B cell (primary cell): ENCODE measurements at regions of chr16 and their contacts with region 1.

Region 1: GRCh38 chr16:17467923-17468540 is 2.7 kb downstream of the XYLT1 start:
- DNase-seq: peak; percentile 58
- ATAC-seq: peak; percentile 28
- H3K4me3 ChIP-seq: peak overlapping the region in 1 of 5 experiments; percentile 17
- H3K4me3 Mint-ChIP-seq: peak overlapping the region; percentile 93
- H3K27ac ChIP-seq: no peak overlapping the region
- H3K27ac Mint-ChIP-seq: no peak overlapping the region
- H3K4me1 ChIP-seq: peaks cover 42 to 46% of the 10 kb centered on the region in 2 donors
- H3K4me1 Mint-ChIP-seq: peaks cover 56% of the 10 kb centered on the region
- H3K27me3 ChIP-seq: no peaks in the 10 kb centered on the region
- H3K27me3 Mint-ChIP-seq: no peaks in the 10 kb centered on the region
- CTCF ChIP-seq: peak; percentile 12

Region 2: GRCh38 chr16:16861546-16861945 is 606.5 kb before region 1 on chr16:
- CTCF ChIA-PET with region 1: no interaction called
- POLR2A ChIA-PET with region 1: no interaction called
- intact Hi-C with region 1: loop called (anchors 5 kb)
- DNase-seq: peak; percentile 67
- ATAC-seq: no peak
- H3K4me3 ChIP-seq: no peak overlapping the region
- H3K4me3 Mint-ChIP-seq: no peak overlapping the region
- H3K27ac ChIP-seq: no peak overlapping the region
- H3K27ac Mint-ChIP-seq: no peak overlapping the region
- H3K4me1 ChIP-seq: no peaks in the 10 kb centered on the region
- H3K4me1 Mint-ChIP-seq: no peaks in the 10 kb centered on the region
- H3K27me3 ChIP-seq: no peaks in the 10 kb centered on the region
- H3K27me3 Mint-ChIP-seq: peaks cover 6% of the 10 kb centered on the region
- CTCF ChIP-seq: peak; percentile 81

Region 3: DNA sequence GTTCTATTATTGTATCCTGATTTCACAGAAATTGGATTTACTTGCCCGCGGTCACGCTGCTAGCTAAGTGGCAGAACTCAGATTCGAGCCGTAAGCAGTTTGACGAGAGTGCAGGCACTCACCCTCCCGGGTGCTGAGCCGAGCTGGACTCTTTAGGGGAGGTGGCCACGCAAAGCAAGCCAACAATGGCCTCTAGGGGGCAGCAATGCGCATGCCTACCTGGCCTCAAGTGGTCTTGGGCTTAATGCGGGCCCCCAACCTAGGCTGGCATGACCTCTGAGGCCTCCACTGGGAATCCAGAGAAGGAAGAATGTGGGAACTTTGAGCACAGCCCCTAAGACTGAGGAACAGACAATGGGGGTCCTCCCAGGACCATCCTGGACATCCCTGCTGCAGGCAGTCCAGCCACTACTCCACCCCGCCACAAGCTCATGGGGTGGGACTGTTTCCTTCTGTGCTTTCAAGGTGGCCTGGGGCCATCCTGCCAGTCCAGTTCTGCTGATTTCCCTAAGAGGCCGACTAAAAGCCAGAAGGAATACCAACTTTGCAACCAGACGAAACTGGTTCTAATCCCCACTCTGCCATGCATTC is 273.7 kb before region 1 on chr16:
- CTCF ChIA-PET with region 1: interaction called, 19 read pairs
- POLR2A ChIA-PET with region 1: no interaction called
- intact Hi-C with region 1: no loop called
- DNase-seq: peak; percentile 67
- ATAC-seq: peak; percentile 51
- H3K4me3 ChIP-seq: no peak overlapping the region
- H3K4me3 Mint-ChIP-seq: no peak overlapping the region
- H3K27ac ChIP-seq: no peak overlapping the region
- H3K27ac Mint-ChIP-seq: peak overlapping the region; percentile 15
- H3K4me1 ChIP-seq: peaks cover 0 to 3% of the 10 kb centered on the region in 2 donors
- H3K4me1 Mint-ChIP-seq: no peaks in the 10 kb centered on the region
- H3K27me3 ChIP-seq: no peaks in the 10 kb centered on the region
- H3K27me3 Mint-ChIP-seq: no peaks in the 10 kb centered on the region
- CTCF ChIP-seq: peak; percentile 76

Region 4: DNA sequence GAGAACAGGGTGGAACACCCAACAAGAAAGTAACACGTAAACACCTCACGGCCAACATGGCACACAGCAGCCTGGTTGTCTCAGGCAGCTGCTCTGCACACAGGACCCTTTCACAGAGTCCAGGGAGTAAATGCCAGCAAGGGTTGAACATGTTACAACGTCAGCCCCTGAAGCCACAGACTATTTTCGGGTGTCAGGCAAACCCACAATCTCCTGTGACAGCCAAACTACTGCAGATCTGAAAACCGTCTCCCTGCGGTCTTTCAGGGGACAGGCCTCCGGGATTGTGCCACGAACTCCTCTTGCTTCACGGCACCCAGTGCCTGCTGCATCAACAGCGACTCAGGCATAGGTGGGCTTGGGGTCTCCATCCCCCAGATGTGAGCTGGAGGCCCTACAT is 125.0 kb before region 1 on chr16:
- CTCF ChIA-PET with region 1: interaction called, 11 read pairs
- POLR2A ChIA-PET with region 1: no interaction called
- intact Hi-C with region 1: no loop called
- DNase-seq: peak; percentile 69
- ATAC-seq: peak; percentile 63
- H3K4me3 ChIP-seq: peak overlapping the region in 2 of 5 experiments; percentile 14 to 17
- H3K4me3 Mint-ChIP-seq: peak overlapping the region; percentile 66
- H3K27ac ChIP-seq: peak overlapping the region; percentile 62 to 72
- H3K27ac Mint-ChIP-seq: peak overlapping the region; percentile 87
- H3K4me1 ChIP-seq: peaks cover 73 to 80% of the 10 kb centered on the region in 2 donors
- H3K4me1 Mint-ChIP-seq: peaks cover 68% of the 10 kb centered on the region
- H3K27me3 ChIP-seq: no peaks in the 10 kb centered on the region
- H3K27me3 Mint-ChIP-seq: no peaks in the 10 kb centered on the region
- CTCF ChIP-seq: no peak

Region 5: DNA sequence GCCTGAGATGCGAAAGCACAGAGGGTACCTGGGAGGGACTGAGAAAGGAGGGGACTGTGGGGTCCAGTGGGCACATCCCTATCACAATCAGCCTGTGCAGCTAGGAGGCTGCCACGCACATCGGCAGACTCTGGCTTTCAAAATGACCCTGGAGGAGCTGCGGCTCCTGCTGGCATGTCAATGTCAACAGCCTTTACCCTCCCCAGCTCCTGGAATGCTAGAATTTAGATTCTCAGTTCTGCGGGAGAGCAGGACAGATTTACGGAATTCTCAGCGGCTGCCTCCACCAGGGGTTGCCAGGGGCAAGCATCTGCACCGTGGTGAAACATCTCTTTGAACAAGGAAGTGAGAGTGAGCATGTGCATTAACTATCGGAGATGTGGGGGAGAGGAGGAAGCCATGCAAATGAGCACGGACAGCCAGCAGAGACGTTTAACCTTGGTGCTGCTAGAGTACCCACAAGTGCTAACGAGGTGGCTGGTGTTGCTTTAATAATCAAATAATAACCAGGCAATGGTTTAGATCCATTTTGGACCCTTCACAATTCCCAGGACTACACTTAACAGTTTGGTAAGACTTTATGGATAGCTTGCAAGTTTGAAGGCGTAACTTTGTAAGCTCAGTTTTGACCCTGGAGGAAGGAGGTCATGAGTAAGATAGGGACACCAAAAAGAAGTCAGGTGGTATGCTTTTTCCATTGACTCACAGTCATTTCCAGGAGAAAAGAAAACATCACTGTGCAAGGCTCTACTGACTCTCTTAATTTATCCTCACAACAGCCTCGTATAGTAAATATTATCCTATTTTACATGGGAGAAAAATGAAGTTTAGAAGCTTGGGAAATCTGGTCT is 51.3 kb before region 1 on chr16:
- CTCF ChIA-PET with region 1: interaction called, 30 read pairs
- POLR2A ChIA-PET with region 1: no interaction called
- intact Hi-C with region 1: loop called (anchors 2 kb)
- DNase-seq: peak; percentile 90
- ATAC-seq: peak; percentile 91
- H3K4me3 ChIP-seq: peak overlapping the region; percentile 2 to 61 (median 40)
- H3K4me3 Mint-ChIP-seq: peak overlapping the region; percentile 85
- H3K27ac ChIP-seq: peak overlapping the region; percentile 76 to 81
- H3K27ac Mint-ChIP-seq: peak overlapping the region; percentile 90
- H3K4me1 ChIP-seq: peaks cover 61 to 68% of the 10 kb centered on the region in 2 donors
- H3K4me1 Mint-ChIP-seq: peaks cover 69% of the 10 kb centered on the region
- H3K27me3 ChIP-seq: no peaks in the 10 kb centered on the region
- H3K27me3 Mint-ChIP-seq: no peaks in the 10 kb centered on the region
- CTCF ChIP-seq: peak; percentile 68